Common myeloid progenitor, CD34-positive (primary cell): ENCODE measurements at regions of chr18 and their contacts with region 1.

Region 1: GRCh38 chr18:505483-506122 is 5.1 kb upstream of the COLEC12 start:
- DNase-seq: no peak
- H3K4me3 ChIP-seq: no peak overlapping the region
- H3K27ac ChIP-seq: no peak overlapping the region
- H3K4me1 ChIP-seq: peaks cover 0 to 8% (median 6%) of the 10 kb centered on the region in 4 experiments
- H3K27me3 ChIP-seq: peaks cover 0 to 11% (median 3%) of the 10 kb centered on the region in 5 experiments

Region 2: GRCh38 chr18:293536-293935 is 212.1 kb before region 1 on chr18:
- CTCF ChIA-PET with region 1: no interaction called
- POLR2A ChIA-PET with region 1: no interaction called
- DNase-seq: peak in 1 of 3 donors; percentile 11
- H3K4me3 ChIP-seq: no peak overlapping the region
- H3K27ac ChIP-seq: no peak overlapping the region
- H3K4me1 ChIP-seq: peaks cover 0 to 7% (median 0%) of the 10 kb centered on the region in 4 experiments
- H3K27me3 ChIP-seq: no peaks in the 10 kb centered on the region

Region 3: DNA sequence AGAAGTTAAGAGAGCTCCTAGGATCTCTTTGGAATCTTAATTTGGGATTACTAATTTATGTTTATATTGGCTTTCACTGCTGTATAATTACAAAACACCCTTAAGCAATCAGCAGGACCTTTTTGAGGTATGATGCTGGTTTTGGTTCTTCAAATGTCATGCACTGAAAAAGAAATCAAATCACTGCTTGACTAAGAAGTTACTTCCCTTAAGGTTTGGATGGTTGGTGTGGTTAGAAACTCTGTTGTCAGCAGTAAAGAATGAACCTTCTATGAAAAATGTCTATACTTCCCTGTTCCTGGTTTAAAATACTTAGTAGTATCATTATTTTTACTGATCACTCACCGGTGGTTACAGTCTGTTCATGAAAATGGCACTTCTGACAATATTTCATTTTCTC is 10.6 kb before region 1 on chr18:
- CTCF ChIA-PET with region 1: interaction called, 11 read pairs
- POLR2A ChIA-PET with region 1: no interaction called
- DNase-seq: no peak
- H3K4me3 ChIP-seq: no peak overlapping the region
- H3K27ac ChIP-seq: no peak overlapping the region
- H3K4me1 ChIP-seq: peaks cover 5 to 13% (median 12%) of the 10 kb centered on the region in 4 experiments
- H3K27me3 ChIP-seq: peaks cover 11 to 29% (median 16%) of the 10 kb centered on the region in 5 experiments

Region 4: DNA sequence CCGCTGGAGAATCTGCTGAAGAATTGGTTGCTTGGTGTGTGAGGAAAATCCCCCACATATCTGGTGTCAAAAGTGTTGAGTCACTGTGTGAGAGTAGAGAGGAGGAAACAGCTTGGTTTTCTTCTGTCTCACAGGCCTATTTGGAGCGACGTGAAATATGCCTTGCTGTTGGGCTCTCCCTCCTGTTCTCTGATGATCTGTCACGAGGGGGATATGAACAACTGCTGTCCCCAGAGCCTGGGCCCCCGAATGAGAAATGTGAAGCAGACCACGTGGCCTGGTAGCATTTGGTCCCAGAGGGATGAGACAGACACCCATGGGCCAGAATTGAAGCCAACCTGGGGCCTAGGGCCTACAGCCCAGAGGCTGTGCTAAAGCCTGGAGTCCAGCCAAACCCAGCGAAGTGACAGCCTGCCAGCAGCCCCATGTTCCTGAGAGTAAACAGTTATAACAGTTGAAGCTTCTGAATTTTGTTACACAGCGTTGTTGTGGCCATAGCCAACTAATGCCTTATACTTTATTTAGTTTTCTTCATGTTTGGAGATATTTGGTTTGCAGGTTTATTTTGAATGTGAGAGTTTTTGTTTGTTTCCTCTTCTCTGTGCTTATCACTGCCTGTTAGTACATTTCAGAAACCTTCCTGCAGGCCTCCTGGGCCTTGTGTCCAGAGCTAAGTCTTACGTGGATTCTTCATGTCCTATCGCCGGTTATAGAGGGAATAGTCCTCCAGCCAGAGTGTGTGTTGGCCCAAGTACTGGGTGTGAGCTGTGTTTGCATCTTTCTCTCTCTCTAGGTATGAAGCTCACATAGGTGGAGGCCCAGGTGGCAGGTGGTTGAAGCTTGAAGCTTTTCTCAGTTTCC is 13.6 kb after region 1 on chr18:
- CTCF ChIA-PET with region 1: interaction called, 29 read pairs
- POLR2A ChIA-PET with region 1: no interaction called
- DNase-seq: peak; percentile 89 to 99 (median 97)
- H3K4me3 ChIP-seq: peak overlapping the region in 1 of 7 experiments; percentile 1
- H3K27ac ChIP-seq: peak overlapping the region; percentile 69 to 80
- H3K4me1 ChIP-seq: peaks cover 0 to 24% (median 19%) of the 10 kb centered on the region in 4 experiments
- H3K27me3 ChIP-seq: no peaks in the 10 kb centered on the region